Activated CD8-positive, alpha-beta T cell treated with anti-CD3 and anti-CD28 coated beads for 36 hours (primary cell): ENCODE measurements at regions of chr10 and their contacts with region 1.

Region 1: GRCh38 chr10:100046021-100046486 is 35.6 kb downstream of the CPN1 start:
- DNase-seq: peak; percentile 91
- ATAC-seq: peak; percentile 85
- H3K4me3 Mint-ChIP-seq: no peak overlapping the region
- H3K27ac Mint-ChIP-seq: no peak overlapping the region
- H3K4me1 Mint-ChIP-seq: no peaks in the 10 kb centered on the region
- H3K27me3 Mint-ChIP-seq: peaks cover 4% of the 10 kb centered on the region
- CTCF ChIP-seq: peak; percentile 88

Region 2: GRCh38 chr10:99827936-99828335 is 218.1 kb before region 1 on chr10:
- CTCF ChIA-PET with region 1: interaction called, 14 read pairs
- POLR2A ChIA-PET with region 1: no interaction called
- intact Hi-C with region 1: no loop called
- DNase-seq: no peak
- ATAC-seq: no peak
- H3K4me3 Mint-ChIP-seq: no peak overlapping the region
- H3K27ac Mint-ChIP-seq: no peak overlapping the region
- H3K4me1 Mint-ChIP-seq: peaks cover 5% of the 10 kb centered on the region
- H3K27me3 Mint-ChIP-seq: no peaks in the 10 kb centered on the region
- CTCF ChIP-seq: no peak

Region 3: DNA sequence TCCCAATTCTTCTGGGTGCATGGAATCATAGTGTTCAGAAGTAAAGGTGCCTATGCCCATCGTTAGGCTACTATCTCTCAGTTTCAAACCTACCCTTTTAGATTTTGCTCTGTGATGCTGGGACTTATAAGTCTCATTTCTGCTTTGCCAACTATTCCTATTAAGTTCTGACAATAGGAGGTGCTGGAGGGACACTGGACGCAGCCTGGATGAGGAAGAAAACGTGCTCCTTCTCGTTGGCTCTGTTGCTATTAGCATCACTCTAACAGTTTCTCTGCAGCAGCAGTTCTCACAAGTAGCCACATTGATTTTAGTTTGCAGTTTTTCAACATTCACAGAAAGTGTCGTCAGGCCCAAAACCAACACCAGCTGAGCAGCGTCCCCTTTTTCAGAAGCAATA is 191.2 kb before region 1 on chr10:
- CTCF ChIA-PET with region 1: interaction called, 196 read pairs
- POLR2A ChIA-PET with region 1: no interaction called
- intact Hi-C with region 1: no loop called
- DNase-seq: no peak
- ATAC-seq: no peak
- H3K4me3 Mint-ChIP-seq: no peak overlapping the region
- H3K27ac Mint-ChIP-seq: no peak overlapping the region
- H3K4me1 Mint-ChIP-seq: no peaks in the 10 kb centered on the region
- H3K27me3 Mint-ChIP-seq: peaks cover 2% of the 10 kb centered on the region
- CTCF ChIP-seq: no peak

Region 4: DNA sequence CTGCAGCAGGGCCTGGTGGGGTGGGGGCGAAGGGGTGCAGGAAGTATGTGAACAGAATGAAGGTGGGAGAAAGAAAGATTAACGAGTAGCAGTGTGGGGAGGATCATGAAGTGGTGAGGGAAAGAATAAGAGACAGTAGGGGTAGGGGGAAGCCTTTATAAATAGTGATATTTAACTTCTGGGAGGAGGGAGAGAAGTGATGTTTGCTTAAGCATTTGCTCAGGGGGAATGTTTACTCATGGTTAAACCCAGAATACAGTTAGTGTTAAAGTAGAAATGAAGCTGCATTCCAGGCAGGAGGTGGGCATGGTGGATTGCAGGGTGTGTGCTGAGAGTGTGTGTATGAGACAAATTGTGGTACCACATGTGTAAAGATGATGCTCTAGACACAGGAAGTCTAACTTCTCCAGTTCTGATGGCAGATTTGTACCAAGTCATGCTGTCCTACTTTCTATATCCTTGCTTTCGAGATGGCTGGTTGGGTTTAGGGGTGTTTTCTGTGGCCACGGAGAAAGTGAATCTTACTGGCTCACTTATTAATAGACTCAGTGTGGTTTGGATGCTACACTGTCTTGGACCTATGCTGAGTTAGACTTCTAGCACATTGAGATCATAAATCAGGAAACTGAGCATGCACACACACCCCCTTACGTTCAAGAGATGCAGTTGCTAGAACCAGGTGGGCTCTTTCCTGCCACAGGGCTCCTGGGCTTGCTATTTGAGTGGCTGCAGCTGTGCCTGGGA is 25.7 kb before region 1 on chr10:
- CTCF ChIA-PET with region 1: interaction called, 14 read pairs
- POLR2A ChIA-PET with region 1: no interaction called
- intact Hi-C with region 1: no loop called
- DNase-seq: peak; percentile 47
- ATAC-seq: peak; percentile 91
- H3K4me3 Mint-ChIP-seq: no peak overlapping the region
- H3K27ac Mint-ChIP-seq: no peak overlapping the region
- H3K4me1 Mint-ChIP-seq: peaks cover 10% of the 10 kb centered on the region
- H3K27me3 Mint-ChIP-seq: peaks cover 6% of the 10 kb centered on the region
- CTCF ChIP-seq: no peak

Region 5: GRCh38 chr10:100025576-100025975 is 20.5 kb before region 1 on chr10:
- CTCF ChIA-PET with region 1: interaction called, 14 read pairs
- POLR2A ChIA-PET with region 1: no interaction called
- intact Hi-C with region 1: no loop called
- DNase-seq: no peak
- ATAC-seq: no peak
- H3K4me3 Mint-ChIP-seq: no peak overlapping the region
- H3K27ac Mint-ChIP-seq: no peak overlapping the region
- H3K4me1 Mint-ChIP-seq: peaks cover 3% of the 10 kb centered on the region
- H3K27me3 Mint-ChIP-seq: peaks cover 4% of the 10 kb centered on the region
- CTCF ChIP-seq: no peak

Region 6: GRCh38 chr10:100229819-100230422 is 183.9 kb after region 1 on chr10:
- CTCF ChIA-PET with region 1: no interaction called
- POLR2A ChIA-PET with region 1: no interaction called
- intact Hi-C with region 1: no loop called
- DNase-seq: peak; percentile 17
- ATAC-seq: no peak
- H3K4me3 Mint-ChIP-seq: peak overlapping the region; percentile 84
- H3K27ac Mint-ChIP-seq: peak overlapping the region; percentile 76
- H3K4me1 Mint-ChIP-seq: peaks cover 28% of the 10 kb centered on the region
- H3K27me3 Mint-ChIP-seq: no peaks in the 10 kb centered on the region
- CTCF ChIP-seq: no peak

Region 7: GRCh38 chr10:100245484-100246220 is 199.6 kb after region 1 on chr10:
- CTCF ChIA-PET with region 1: no interaction called
- POLR2A ChIA-PET with region 1: no interaction called
- intact Hi-C with region 1: no loop called
- DNase-seq: no peak
- ATAC-seq: no peak
- H3K4me3 Mint-ChIP-seq: no peak overlapping the region
- H3K27ac Mint-ChIP-seq: no peak overlapping the region
- H3K4me1 Mint-ChIP-seq: peaks cover under 1% of the 10 kb centered on the region
- H3K27me3 Mint-ChIP-seq: no peaks in the 10 kb centered on the region
- CTCF ChIP-seq: no peak